Activated B cell treated with CpG ODN at 0.5 μM for 24 hours (primary cell): ENCODE measurements at regions of chr2 and their contacts with region 1.

Region 1: GRCh38 chr2:201071479-201072200 is at the starts of genes HYCC2 and NDUFB3:
- DNase-seq: peak; percentile 77
- ATAC-seq: peak; percentile 96
- H3K4me3 Mint-ChIP-seq: peak within 1 kb of the TSS; percentile 98
- H3K27ac Mint-ChIP-seq: peak within 1 kb of the TSS; percentile 96
- H3K4me1 Mint-ChIP-seq: peaks cover 50% of the 10 kb centered on the region
- H3K27me3 Mint-ChIP-seq: no peaks in the 10 kb centered on the region
- CTCF ChIP-seq: no peak
- total RNA-seq, gene HYCC2: 32.0 and 39.6 TPM in 2 replicates
- total RNA-seq, gene NDUFB3: 85.4 and 94.2 TPM in 2 replicates

Region 2: GRCh38 chr2:199955339-199956261 is 1116.0 kb before region 1 on chr2 and contains the starts of genes MAIP1 and TYW5:
- CTCF ChIA-PET with region 1: no interaction called
- POLR2A ChIA-PET with region 1: no interaction called
- intact Hi-C with region 1: loop called (anchors 10 kb)
- DNase-seq: peak; percentile 75
- ATAC-seq: peak; percentile 87
- H3K4me3 Mint-ChIP-seq: peak within 1 kb of the TSS; percentile 99
- H3K27ac Mint-ChIP-seq: peak within 1 kb of the TSS; percentile 91
- H3K4me1 Mint-ChIP-seq: peaks cover 48% of the 10 kb centered on the region
- H3K27me3 Mint-ChIP-seq: no peaks in the 10 kb centered on the region
- CTCF ChIP-seq: no peak
- total RNA-seq, gene MAIP1: 20.2 and 20.7 TPM in 2 replicates
- total RNA-seq, gene TYW5: 10.5 and 12.5 TPM in 2 replicates

Region 3: GRCh38 chr2:200713003-200713703 is 358.5 kb before region 1 on chr2:
- CTCF ChIA-PET with region 1: interaction called, 10 read pairs
- POLR2A ChIA-PET with region 1: interaction called, 5 read pairs
- intact Hi-C with region 1: loop called (anchors 1 kb)
- DNase-seq: peak; percentile 68
- ATAC-seq: peak; percentile 99
- H3K4me3 Mint-ChIP-seq: peak overlapping the region; percentile 76
- H3K27ac Mint-ChIP-seq: peak overlapping the region; percentile 95
- H3K4me1 Mint-ChIP-seq: peaks cover 16% of the 10 kb centered on the region
- H3K27me3 Mint-ChIP-seq: peaks cover 2% of the 10 kb centered on the region
- CTCF ChIP-seq: no peak

Region 4: GRCh38 chr2:200888704-200889625 is 182.7 kb before region 1 on chr2 and contains the starts of genes NIF3L1 and PPIL3:
- CTCF ChIA-PET with region 1: interaction called, 3 read pairs
- POLR2A ChIA-PET with region 1: interaction called, 4 read pairs
- intact Hi-C with region 1: loop called (anchors 1 kb)
- DNase-seq: peak; percentile 90
- ATAC-seq: peak; percentile 80
- H3K4me3 Mint-ChIP-seq: peak within 1 kb of the TSS; percentile 99
- H3K27ac Mint-ChIP-seq: peak within 1 kb of the TSS; percentile 100
- H3K4me1 Mint-ChIP-seq: peaks cover 40% of the 10 kb centered on the region
- H3K27me3 Mint-ChIP-seq: no peaks in the 10 kb centered on the region
- CTCF ChIP-seq: no peak
- total RNA-seq, gene NIF3L1: 32.2 and 32.3 TPM in 2 replicates
- total RNA-seq, gene PPIL3: 43.5 and 52.5 TPM in 2 replicates

Region 5: GRCh38 chr2:200963124-200963917 is 108.3 kb before region 1 on chr2 and contains the start of gene ORC2:
- CTCF ChIA-PET with region 1: interaction called, 46 read pairs
- POLR2A ChIA-PET with region 1: interaction called, 15 read pairs
- intact Hi-C with region 1: loop called (anchors 1 kb)
- DNase-seq: peak; percentile 94
- ATAC-seq: peak; percentile 93
- H3K4me3 Mint-ChIP-seq: peak within 1 kb of the TSS; percentile 97
- H3K27ac Mint-ChIP-seq: peak within 1 kb of the TSS; percentile 97
- H3K4me1 Mint-ChIP-seq: peaks cover 63% of the 10 kb centered on the region
- H3K27me3 Mint-ChIP-seq: no peaks in the 10 kb centered on the region
- CTCF ChIP-seq: no peak
- total RNA-seq, gene ORC2: 36.8 and 38.1 TPM in 2 replicates

Region 6: GRCh38 chr2:201158111-201158929 is 86.7 kb after region 1 on chr2:
- CTCF ChIA-PET with region 1: interaction called, 17 read pairs
- POLR2A ChIA-PET with region 1: interaction called, 14 read pairs
- intact Hi-C with region 1: loop called (anchors 1 kb)
- DNase-seq: peak; percentile 71
- ATAC-seq: peak; percentile 87
- H3K4me3 Mint-ChIP-seq: peak overlapping the region; percentile 73
- H3K27ac Mint-ChIP-seq: peak overlapping the region; percentile 95
- H3K4me1 Mint-ChIP-seq: peaks cover 56% of the 10 kb centered on the region
- H3K27me3 Mint-ChIP-seq: no peaks in the 10 kb centered on the region
- CTCF ChIP-seq: no peak

Region 7: GRCh38 chr2:201257956-201258665 is 186.5 kb after region 1 on chr2:
- CTCF ChIA-PET with region 1: no interaction called
- POLR2A ChIA-PET with region 1: no interaction called
- intact Hi-C with region 1: loop called (anchors 1 kb)
- DNase-seq: peak; percentile 68
- ATAC-seq: peak; percentile 61
- H3K4me3 Mint-ChIP-seq: peak overlapping the region; percentile 90
- H3K27ac Mint-ChIP-seq: peak overlapping the region; percentile 98
- H3K4me1 Mint-ChIP-seq: peaks cover 83% of the 10 kb centered on the region
- H3K27me3 Mint-ChIP-seq: no peaks in the 10 kb centered on the region
- CTCF ChIP-seq: no peak